Lower leg skin (tissue), 4 donors: ENCODE measurements at regions of chr13 and their contacts with region 1.

Region 1: DNA sequence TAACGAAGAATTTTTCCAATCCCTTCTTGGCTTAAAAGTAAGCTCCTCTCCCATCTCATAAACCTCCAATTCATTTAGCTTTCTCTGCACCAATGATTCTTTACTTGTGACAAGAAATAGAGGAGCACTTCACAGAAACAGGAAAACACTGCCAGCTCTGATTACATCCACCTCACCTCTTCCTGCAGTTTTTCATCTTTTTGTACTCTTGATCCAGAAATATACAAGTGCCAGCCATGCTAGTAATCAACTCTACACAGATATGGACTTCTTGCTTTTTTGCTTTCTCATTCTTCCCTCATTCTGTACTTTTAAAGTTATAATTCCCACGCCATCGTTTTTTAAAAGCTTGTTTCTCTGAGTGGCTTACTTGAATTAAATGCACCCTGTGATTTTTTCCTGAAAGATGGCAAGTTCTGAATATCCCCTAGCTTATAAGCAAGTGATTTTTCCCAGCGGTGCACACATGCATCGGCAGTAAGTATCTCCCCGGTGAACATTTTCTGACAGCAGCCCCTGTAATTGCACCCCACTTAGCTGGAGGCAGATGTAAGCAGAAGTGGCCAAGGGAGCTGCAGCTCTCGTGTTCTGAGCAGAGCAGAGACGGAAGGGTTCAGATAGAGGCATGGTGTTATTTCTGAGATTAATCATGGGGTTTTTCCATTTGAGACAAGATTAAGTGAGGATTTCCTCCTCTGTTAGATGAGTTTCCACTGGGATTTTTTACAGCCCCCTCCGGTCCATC is 340.7 kb downstream of the SLC7A1 start:
- DNase-seq: no peak
- H3K4me3 ChIP-seq: no peak overlapping the region
- CTCF ChIP-seq: no peak
- POLR2A ChIP-seq: no peak

Region 2: DNA sequence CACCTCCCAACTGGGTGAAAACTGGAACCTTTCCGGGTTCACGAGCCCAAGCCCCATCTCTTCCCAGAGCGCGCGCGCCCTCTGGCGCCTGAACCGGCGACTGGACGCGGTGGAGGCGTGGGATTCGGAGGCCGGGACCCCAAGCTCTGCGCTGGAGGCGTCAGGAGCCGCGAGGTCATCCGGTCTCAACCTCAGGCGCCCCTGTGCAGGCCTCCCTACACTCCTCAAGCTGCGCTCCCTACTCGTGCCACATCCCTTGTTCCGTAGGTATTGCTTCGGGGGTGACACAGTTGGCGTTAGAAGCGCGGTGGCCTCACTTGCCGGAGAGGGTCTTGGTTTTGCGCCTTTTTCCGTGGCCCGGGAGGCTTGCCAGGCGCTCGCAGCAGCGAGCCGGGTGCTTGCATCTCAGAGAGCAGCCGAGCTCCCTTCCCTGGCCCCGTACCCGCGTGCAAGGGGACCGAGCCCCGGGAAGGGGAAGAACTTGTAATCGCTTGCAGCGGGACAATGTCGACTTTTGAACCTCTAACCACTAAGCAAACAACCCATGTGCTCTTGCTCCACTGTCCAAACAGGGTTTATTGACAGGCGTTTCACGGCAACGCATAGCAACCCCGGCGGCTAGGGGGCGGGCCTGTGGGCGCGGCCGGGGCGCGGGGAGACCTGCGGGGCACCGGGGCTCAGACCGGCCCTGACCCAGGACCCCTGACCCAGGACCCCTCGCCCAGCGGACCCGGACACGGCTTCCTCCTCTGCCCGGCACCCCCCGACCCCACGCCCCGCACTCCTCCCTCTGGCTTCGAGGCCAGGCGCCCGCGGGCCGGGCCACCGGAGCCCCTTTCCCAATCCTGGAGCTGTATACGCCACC is 1294.2 kb before region 1 on chr13:
- intact Hi-C with region 1: loop called (anchors 10 kb)
- DNase-seq: peak in 1 of 2 donors; percentile 84
- H3K4me3 ChIP-seq: no peak overlapping the region
- CTCF ChIP-seq: no peak
- POLR2A ChIP-seq: no peak

Region 3: DNA sequence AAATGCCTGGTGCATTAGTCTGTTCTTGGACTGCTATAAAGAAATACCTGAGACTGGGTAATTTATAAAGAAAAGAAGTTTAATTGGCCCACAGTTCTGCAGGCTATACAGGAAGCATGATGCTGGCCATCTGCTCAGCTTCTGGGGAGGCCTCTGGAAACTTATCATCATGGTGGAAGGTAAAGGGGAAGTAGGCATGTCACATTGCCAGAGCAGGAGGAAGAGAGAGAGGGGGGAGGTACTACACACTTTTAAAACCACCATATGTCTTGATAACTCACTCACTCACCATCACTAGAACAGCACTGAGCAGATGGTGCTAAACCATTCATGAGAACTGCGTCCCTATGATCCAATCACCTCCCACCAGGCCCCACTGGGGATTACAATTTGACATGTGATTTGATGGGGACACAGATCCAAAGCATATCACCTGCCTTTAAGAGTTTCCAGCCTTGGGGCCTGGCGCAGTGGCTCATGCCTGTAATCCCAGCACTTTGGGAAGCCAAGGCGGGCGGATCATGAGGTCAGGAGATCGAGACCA is 833.6 kb after region 1 on chr13:
- intact Hi-C with region 1: no loop called
- DNase-seq: no peak
- H3K4me3 ChIP-seq: no peak overlapping the region
- CTCF ChIP-seq: no peak
- POLR2A ChIP-seq: no peak